G401 (cell line): ENCODE measurements at regions of chr6 and their contacts with region 1.

Region 1: GRCh38 chr6:108541838-108542759 is 18.6 kb upstream of the FOXO3 start:
- DNase-seq: peak; percentile 92

Region 2: GRCh38 chr6:108247954-108248536 is 294.1 kb before region 1 on chr6:
- in situ Hi-C with region 1: no loop called
- DNase-seq: no peak

Region 3: GRCh38 chr6:108848116-108848868 is 306.2 kb after region 1 on chr6 and contains the start of gene ARMC2:
- in situ Hi-C with region 1: loop called (anchors 25 kb)
- DNase-seq: peak; percentile 94
- total RNA-seq, gene ARMC2: 0.54 and 2.5 TPM in 2 replicates